Activated T-helper 2 cell treated with anti-CD3 and anti-CD28 coated beads, Interferon-gamma antibody, Interleukin-2, Interleukin-4, amounts not matched to agents 10 μg/mL and 5 μg/mL and 100 μg/mL, durations not matched to agents 14 hours and 24 hours and 36 hours (primary cell): ENCODE measurements at regions of chrX and their contacts with region 1.

Region 1: GRCh38 chrX:97685753-97686152 is 802.0 kb downstream of the RPA4 start:
- DNase-seq: no peak
- H3K4me3 Mint-ChIP-seq: no peak overlapping the region
- H3K27ac Mint-ChIP-seq: no peak overlapping the region
- H3K4me1 Mint-ChIP-seq: peaks cover 2% of the 10 kb centered on the region
- H3K27me3 Mint-ChIP-seq: peaks cover 7% of the 10 kb centered on the region

Region 2: GRCh38 chrX:97026406-97026805 is 659.3 kb before region 1 on chrX:
- intact Hi-C with region 1: loop called (anchors 10 kb)
- DNase-seq: no peak
- H3K4me3 Mint-ChIP-seq: no peak overlapping the region
- H3K27ac Mint-ChIP-seq: no peak overlapping the region
- H3K4me1 Mint-ChIP-seq: peaks cover 8% of the 10 kb centered on the region
- H3K27me3 Mint-ChIP-seq: no peaks in the 10 kb centered on the region

Region 3: DNA sequence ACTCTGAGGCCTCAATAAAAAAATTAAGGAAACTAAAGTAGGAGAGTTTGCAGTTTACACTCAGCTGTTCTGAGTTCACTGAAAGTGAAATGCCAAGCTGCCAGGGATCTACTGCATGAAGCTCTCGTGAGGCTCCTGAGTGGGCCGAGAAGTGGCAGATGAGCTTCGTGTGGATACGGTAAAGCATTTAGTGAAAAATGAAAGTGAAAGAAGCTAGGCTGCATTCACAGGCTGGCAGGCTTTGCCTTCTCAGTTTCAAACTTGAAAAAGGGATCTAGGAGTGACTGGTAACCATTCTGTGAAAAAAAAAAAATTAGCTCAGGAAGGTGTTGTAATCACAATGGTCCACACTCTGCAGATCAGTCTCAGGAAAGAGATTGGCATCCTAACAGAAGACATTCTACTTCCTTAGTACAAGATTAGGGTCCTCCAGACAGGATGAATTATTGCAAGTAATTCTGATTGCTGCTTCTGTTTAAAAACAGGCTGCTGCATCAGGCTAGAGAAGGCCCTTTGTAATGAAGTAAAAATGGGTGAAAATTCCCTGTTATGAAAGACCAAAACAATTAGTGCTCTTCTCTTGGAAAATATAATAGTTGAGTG is 122.1 kb before region 1 on chrX:
- intact Hi-C with region 1: loop called (anchors 10 kb)
- DNase-seq: peak; percentile 27
- H3K4me3 Mint-ChIP-seq: peak overlapping the region; percentile 69
- H3K27ac Mint-ChIP-seq: peak overlapping the region; percentile 68
- H3K4me1 Mint-ChIP-seq: peaks cover 11% of the 10 kb centered on the region
- H3K27me3 Mint-ChIP-seq: no peaks in the 10 kb centered on the region